Mucosa of descending colon (tissue), 3 donors: ENCODE measurements at regions of chr5 and their contacts with region 1.

Region 1: DNA sequence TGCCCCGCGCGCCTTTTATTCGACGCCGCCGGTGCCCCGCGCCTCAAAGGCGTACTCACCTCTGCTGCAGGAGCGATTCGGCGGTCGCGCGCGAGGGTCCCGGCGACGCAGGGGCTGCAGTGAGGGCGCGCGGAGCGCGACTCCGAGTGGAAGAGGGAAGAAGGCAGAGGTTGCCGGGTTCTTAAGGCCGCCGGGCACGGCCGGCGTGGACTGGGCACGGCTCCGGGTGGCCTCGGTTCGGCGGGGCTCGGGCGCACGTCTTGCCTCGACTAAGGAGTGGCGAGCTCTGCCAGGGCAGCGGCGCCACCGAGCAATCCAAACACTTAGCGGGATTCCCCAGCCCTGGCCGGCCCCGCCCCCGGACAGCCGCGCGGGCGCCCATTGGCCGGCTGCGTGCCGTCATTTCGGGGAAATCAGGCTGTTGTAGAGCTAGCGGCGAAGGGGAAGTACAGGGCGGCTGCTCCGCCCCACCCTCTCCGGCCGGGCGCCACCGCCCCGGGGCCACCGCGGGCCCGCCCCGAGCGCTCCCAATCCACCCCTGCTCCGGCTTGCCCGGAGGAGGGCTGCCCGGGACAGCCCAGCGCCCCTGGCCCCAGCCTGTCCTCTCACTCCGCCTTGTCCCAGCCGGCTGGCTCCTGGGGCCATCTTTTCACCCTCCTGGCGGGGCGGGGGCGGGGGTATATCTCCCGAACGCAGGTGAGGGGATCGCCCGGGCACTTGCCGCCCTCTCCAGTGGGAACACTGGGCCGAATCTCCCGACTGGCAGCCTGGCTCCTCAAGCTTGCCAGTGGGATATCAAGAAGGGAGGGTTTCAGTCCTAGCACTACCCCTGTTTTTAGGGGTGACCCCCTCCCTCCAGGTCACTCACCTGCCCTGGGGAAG is at the start of gene IRF1:
- DNase-seq: peak; percentile 96 to 98 (median 98)
- ATAC-seq: peak; percentile 86
- H3K4me3 ChIP-seq: peak within 1 kb of the TSS; percentile 85
- H3K4me1 ChIP-seq: peaks cover 51% of the 10 kb centered on the region
- CTCF ChIP-seq: no peak
- total RNA-seq, gene IRF1: 89.4 to 172 (median 143) TPM

Region 2: GRCh38 chr5:132419502-132420468 is 70.9 kb before region 1 on chr5:
- intact Hi-C with region 1: loop called in 1 of 2 experiments (anchors 10 kb)
- DNase-seq: peak; percentile 75 to 84 (median 82)
- ATAC-seq: peak; percentile 65
- H3K4me3 ChIP-seq: no peak overlapping the region
- H3K4me1 ChIP-seq: peaks cover 85% of the 10 kb centered on the region
- CTCF ChIP-seq: peak; percentile 72